Left ventricle myocardium inferior (tissue), 1 donor: ENCODE measurements at regions of chr1 and their contacts with region 1.

Region 1: GRCh38 chr1:41152622-41153044 is 89.5 kb downstream of the SCMH1 start:
- DNase-seq: no peak
- H3K4me3 ChIP-seq: no peak overlapping the region
- H3K27ac ChIP-seq: peak overlapping the region; percentile 32
- H3K4me1 ChIP-seq: peaks cover 26% of the 10 kb centered on the region
- H3K27me3 ChIP-seq: no peaks in the 10 kb centered on the region
- CTCF ChIP-seq: no peak

Region 2: DNA sequence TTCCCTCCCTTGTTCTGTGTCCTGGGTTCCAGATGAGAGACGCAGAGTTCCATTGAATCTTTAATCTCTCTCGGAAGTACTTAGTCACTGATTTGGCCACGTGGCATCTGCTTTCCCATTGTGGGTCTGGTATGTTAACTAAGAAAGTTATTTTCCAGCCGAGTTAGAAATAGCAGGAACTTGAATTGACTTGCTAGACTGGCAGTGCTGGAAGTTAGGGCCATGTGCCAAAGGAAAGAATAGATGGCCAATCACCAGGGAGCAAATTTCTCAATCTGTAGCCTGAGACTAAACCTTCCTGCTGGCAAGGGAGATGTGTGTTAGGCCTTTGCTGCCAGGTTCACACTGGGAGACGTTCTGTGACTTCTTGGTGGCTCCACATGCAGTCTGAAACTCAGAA is 106.9 kb before region 1 on chr1:
- intact Hi-C with region 1: loop called (anchors 10 kb)
- DNase-seq: no peak
- H3K4me3 ChIP-seq: no peak overlapping the region
- H3K27ac ChIP-seq: peak overlapping the region; percentile 69
- H3K4me1 ChIP-seq: peaks cover 34% of the 10 kb centered on the region
- H3K27me3 ChIP-seq: no peaks in the 10 kb centered on the region
- CTCF ChIP-seq: no peak

Region 3: GRCh38 chr1:41200728-41201127 is 48.1 kb after region 1 on chr1:
- intact Hi-C with region 1: no loop called
- DNase-seq: no peak
- H3K4me3 ChIP-seq: no peak overlapping the region
- H3K27ac ChIP-seq: no peak overlapping the region
- H3K4me1 ChIP-seq: peaks cover 18% of the 10 kb centered on the region
- H3K27me3 ChIP-seq: no peaks in the 10 kb centered on the region
- CTCF ChIP-seq: no peak

Region 4: DNA sequence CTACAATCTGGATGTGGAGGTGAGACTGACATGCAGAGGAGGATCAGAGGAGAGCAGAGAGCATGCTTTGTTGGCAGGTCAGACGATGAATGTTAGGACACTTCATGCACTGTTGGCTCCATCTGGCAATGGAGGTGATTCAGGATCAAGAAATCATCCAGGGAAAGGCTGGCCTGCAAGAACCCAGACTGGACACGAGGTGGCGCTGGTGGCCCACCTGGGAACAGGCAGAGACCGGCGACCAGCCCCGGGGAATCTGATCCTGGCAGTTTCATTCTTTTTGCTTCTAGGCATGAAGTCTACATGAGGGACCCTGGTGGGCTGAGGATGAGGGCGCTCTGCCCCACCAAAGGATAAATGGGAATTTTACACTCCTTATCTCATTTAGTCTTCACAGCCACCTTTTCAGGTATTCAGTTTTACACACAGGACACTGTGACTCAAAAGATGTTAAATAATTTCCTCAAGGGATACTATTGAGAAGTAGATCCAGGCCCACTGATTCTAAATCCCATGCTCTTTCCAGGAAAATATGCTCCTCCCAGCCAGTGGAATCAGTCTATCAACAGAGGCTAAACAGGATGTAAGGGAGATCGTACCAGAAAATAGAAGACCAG is 115.6 kb after region 1 on chr1:
- intact Hi-C with region 1: no loop called
- DNase-seq: peak; percentile 66
- H3K4me3 ChIP-seq: no peak overlapping the region
- H3K27ac ChIP-seq: no peak overlapping the region
- H3K4me1 ChIP-seq: peaks cover 4% of the 10 kb centered on the region
- H3K27me3 ChIP-seq: no peaks in the 10 kb centered on the region
- CTCF ChIP-seq: peak; percentile 100